Calu3 (cell line): ENCODE measurements at regions of chr16 and their contacts with region 1.

Region 1: DNA sequence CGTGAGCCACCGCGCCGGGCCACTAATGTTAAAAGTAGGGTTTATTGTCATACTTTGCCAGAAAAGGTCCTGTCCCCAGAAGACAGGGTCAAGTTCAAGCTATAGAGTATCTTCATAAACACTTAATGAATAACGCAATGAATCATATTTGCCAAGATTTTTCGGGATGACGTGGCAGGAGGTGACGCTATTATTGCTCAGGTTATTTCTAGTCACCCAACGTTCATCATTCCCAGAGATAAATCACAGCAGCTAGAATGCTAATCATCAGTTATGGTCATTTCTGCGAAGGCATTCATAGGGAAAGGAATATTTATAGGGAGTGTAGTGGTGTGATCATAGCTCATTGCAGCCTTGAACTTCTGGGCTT is 2.0 kb downstream of the TMC5 start:
- DNase-seq: peak; percentile 76
- H3K4me3 Mint-ChIP-seq: peak overlapping the region; percentile 83
- H3K27ac Mint-ChIP-seq: peak overlapping the region; percentile 96
- H3K4me1 Mint-ChIP-seq: peaks cover 77% of the 10 kb centered on the region
- H3K27me3 Mint-ChIP-seq: no peaks in the 10 kb centered on the region
- CTCF ChIP-seq: no peak

Region 2: DNA sequence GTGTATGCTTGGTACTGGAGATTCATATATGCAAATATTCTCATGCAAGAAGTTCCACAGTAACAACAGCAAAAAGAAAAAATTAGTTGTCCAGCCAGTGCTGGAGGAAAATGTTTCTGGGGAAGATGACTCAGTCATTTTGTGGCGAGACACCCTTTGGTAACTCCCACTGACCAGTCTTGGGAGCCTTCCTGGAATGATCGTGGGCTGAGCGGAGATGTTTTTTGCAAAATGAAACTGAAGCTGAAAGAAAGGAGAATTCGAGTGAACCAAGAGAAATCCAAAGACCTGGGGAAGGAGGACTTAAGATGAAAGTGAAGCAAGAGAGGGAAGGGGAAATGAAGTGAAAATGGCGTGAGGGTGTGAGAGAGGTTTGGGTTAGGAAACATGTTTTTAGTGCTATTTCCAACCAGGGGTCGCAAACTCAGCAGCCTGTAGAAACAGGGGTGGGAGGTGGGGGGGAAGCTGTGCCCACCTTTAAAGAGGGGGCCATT is 300.7 kb before region 1 on chr16:
- CTCF ChIA-PET with region 1: interaction called, 13 read pairs
- intact Hi-C with region 1: no loop called
- DNase-seq: peak; percentile 38
- H3K4me3 Mint-ChIP-seq: peak overlapping the region; percentile 64
- H3K27ac Mint-ChIP-seq: peak overlapping the region; percentile 74
- H3K4me1 Mint-ChIP-seq: peaks cover 40% of the 10 kb centered on the region
- H3K27me3 Mint-ChIP-seq: no peaks in the 10 kb centered on the region
- CTCF ChIP-seq: no peak

Region 3: GRCh38 chr16:19265380-19265930 is 154.2 kb before region 1 on chr16:
- CTCF ChIA-PET with region 1: no interaction called
- intact Hi-C with region 1: no loop called
- DNase-seq: no peak
- H3K4me3 Mint-ChIP-seq: no peak overlapping the region
- H3K27ac Mint-ChIP-seq: no peak overlapping the region
- H3K4me1 Mint-ChIP-seq: no peaks in the 10 kb centered on the region
- H3K27me3 Mint-ChIP-seq: no peaks in the 10 kb centered on the region
- CTCF ChIP-seq: no peak

Region 4: DNA sequence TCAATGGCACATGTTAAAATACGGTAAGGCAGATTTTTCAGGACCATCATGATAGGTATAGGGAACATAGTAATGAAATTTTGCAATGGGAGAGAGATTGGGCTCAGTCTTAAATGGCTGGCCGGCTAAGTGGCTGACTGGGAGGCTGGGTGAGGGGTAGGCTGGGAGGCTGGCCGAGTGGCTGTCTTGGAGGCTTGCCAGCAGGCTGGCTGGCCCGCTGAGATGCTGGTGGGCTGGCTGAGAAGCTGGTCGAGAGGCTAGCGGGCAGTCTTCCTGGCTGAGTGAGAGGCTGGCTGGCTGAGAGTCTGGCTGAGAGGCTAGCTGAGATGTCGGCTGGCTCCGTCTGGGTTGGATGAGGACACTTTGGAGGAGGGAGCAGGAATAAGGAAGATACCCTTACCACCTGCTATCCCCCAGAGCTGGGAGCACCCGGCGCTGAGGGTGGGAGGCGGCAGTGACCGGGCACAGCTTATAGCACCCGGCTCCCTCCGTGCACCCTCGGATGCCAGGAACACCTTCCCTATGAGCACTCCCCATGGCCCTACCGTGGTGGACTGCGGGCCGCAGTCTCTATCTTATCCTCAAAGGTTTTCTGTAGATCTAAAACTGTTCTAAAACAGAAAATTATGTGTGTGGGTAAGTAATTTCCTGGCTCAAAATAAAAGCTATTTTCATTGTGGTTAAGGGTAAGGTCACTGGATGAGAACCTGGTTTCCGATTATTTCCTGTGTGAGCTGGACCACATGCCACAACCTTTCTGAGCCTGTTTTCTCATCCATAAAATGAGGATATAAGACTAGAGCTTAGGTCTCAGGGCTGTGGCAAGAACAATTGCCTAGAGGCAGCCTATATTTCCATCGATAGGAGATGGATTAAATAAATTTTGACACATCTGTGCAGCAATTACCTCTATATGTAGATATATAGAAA is 36.5 kb before region 1 on chr16:
- CTCF ChIA-PET with region 1: interaction called, 4 read pairs
- intact Hi-C with region 1: loop called (anchors 2 kb)
- DNase-seq: peak; percentile 69
- H3K4me3 Mint-ChIP-seq: peak overlapping the region; percentile 2
- H3K27ac Mint-ChIP-seq: peak overlapping the region; percentile 5
- H3K4me1 Mint-ChIP-seq: peaks cover 55% of the 10 kb centered on the region
- H3K27me3 Mint-ChIP-seq: no peaks in the 10 kb centered on the region
- CTCF ChIP-seq: no peak

Region 5: DNA sequence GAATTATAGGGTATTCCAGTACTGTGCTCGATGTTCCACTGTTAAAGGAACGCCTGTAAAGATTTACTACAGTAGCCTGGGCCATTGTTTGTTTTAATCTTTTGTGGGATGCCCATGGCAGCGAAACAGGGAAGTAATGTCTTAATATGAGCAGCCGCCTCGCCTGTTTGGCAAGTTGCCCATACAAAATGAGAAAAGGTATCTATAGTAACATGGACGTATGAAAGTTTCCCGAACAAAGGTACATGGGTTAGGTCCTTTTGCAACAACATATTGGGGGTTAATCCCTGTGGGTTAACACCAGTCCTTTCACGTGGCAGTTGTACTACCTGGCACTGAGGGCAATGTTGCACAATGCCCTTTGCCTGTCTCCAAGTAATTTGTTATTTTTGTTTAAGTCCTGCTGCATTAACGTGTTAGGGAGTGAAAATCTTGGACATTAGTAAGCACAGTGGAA is 23.1 kb before region 1 on chr16:
- CTCF ChIA-PET with region 1: interaction called, 14 read pairs
- intact Hi-C with region 1: loop called (anchors 2 kb)
- DNase-seq: peak; percentile 80
- H3K4me3 Mint-ChIP-seq: peak overlapping the region; percentile 57
- H3K27ac Mint-ChIP-seq: peak overlapping the region; percentile 95
- H3K4me1 Mint-ChIP-seq: peaks cover 51% of the 10 kb centered on the region
- H3K27me3 Mint-ChIP-seq: no peaks in the 10 kb centered on the region
- CTCF ChIP-seq: no peak